ENCODE measurements at regions of chr20 and their contacts with region 1.

Region 1: DNA sequence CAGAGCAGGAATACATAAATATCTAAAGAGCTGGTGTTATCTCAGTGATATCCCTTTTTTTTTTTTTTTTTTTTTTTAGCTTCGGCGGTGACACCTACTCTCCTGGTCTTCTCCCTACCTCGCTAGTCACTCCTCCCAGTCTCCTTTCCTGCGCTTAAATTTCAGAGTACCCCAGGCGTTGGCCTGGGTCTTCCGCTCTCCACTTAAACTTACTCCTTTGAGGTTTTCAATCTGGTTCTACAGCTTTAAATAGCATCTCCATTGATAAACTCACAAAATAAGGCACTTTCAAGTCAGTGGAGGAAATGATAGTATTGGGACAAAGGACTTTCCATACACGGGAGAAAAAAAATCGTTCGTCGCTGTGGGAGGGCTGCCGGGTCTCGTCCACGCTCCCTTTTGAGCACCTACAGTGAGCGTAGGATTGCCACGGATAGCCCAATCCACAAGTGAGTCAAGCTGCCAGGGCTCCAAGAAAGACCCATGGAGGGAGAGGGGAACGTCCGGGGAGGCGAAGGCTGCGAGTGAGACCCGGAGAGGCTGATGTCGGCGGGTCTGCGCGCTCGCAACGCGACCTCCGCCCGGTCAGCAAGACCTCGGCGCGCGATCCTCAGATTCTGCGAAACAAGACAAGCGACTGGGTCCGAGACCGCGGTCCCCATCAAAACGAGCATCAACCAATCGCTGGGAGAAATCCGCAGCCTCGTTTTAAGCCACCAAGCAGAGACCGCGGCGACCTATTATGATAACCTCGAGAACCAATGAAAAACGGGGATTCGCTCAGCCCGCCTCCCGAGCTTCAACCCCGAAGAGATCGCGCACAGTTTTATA is 672 bp upstream of the SRSF6 start:
- DNase-seq: peak; percentile 69 to 94 (median 86)
- ATAC-seq: peak; percentile 86
- H3K4me3 ChIP-seq: peak overlapping the region; percentile 92
- H3K27ac ChIP-seq: peak overlapping the region; percentile 100
- H3K4me1 ChIP-seq: peaks cover 7 to 8% of the 10 kb centered on the region in 2 experiments; a peak in 4 of 5 replicates
- H3K27me3 ChIP-seq: no peaks in the 10 kb centered on the region
- CTCF ChIP-seq: no peak
- EP300 ChIP-seq: no peak
- POLR2A ChIP-seq: no peak
- RAD21 ChIP-seq: no peak

Region 2: GRCh38 chr20:43430265-43431133 is 26.5 kb before region 1 on chr20:
- CTCF ChIA-PET with region 1: no interaction called
- POLR2A ChIA-PET with region 1: interaction called, 14 read pairs
- in situ Hi-C with region 1: no loop called
- intact Hi-C with region 1: no loop called
- DNase-seq: no peak
- ATAC-seq: no peak; the same call in 2 of the 3 replicates
- H3K4me3 ChIP-seq: no peak overlapping the region
- H3K27ac ChIP-seq: no peak overlapping the region
- H3K4me1 ChIP-seq: peaks cover 0 to 12% of the 10 kb centered on the region in 2 experiments; a peak in 3 of 5 replicates
- H3K27me3 ChIP-seq: peaks cover 0 to 15% of the 10 kb centered on the region in 2 experiments; a peak in 3 of 5 replicates
- CTCF ChIP-seq: no peak
- EP300 ChIP-seq: no peak
- POLR2A ChIP-seq: no peak
- RAD21 ChIP-seq: no peak

Region 3: GRCh38 chr20:43472671-43473380 is 15.8 kb after region 1 on chr20:
- CTCF ChIA-PET with region 1: no interaction called
- POLR2A ChIA-PET with region 1: interaction called, 34 read pairs
- in situ Hi-C with region 1: no loop called
- intact Hi-C with region 1: no loop called
- DNase-seq: no peak
- ATAC-seq: no peak
- H3K4me3 ChIP-seq: no peak overlapping the region
- H3K27ac ChIP-seq: no peak overlapping the region
- H3K4me1 ChIP-seq: peaks cover 0 to 3% of the 10 kb centered on the region in 2 experiments; a peak in 2 of 5 replicates
- H3K27me3 ChIP-seq: peaks cover 5 to 8% of the 10 kb centered on the region in 2 experiments; a peak in 4 of 5 replicates
- CTCF ChIP-seq: 0 out of 6 replicates have a peak, but pooled peaks of 1 of the 3 experiments have one; percentile 13
- EP300 ChIP-seq: no peak
- POLR2A ChIP-seq: no peak
- RAD21 ChIP-seq: no peak

Region 4: GRCh38 chr20:43508106-43508505 is 51.1 kb after region 1 on chr20:
- CTCF ChIA-PET with region 1: no interaction called
- POLR2A ChIA-PET with region 1: interaction called, 11 read pairs
- in situ Hi-C with region 1: no loop called
- intact Hi-C with region 1: no loop called
- DNase-seq: peak; percentile 48 to 64 (median 56)
- ATAC-seq: peak; percentile 56
- H3K4me3 ChIP-seq: peak overlapping the region; percentile 65
- H3K27ac ChIP-seq: no peak overlapping the region
- H3K4me1 ChIP-seq: peaks cover 3 to 18% of the 10 kb centered on the region in 2 experiments; a peak in 3 of 5 replicates
- H3K27me3 ChIP-seq: peaks cover 12 to 31% of the 10 kb centered on the region in 2 experiments
- CTCF ChIP-seq: no peak
- EP300 ChIP-seq: no peak
- POLR2A ChIP-seq: no peak
- RAD21 ChIP-seq: no peak

Region 5: DNA sequence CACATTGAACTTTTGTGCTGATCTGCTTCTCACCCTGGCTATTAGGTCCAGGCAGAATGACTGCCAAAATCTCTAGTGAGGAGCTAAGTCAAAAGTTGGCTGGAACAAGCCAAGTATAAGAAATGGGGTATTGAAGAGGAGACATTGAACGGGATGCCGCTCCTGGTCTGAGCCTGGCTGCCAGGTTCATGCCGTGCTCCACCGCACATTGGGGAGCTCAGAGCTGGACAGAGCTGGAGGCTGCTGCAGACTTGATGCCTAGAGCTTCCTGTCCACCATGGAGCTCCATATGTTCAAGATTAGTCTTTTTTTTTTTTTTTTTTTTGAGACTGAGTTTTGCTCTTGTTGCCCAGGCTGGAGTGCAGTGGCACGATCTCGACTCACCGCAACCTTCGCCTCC is 129.6 kb after region 1 on chr20:
- CTCF ChIA-PET with region 1: no interaction called
- POLR2A ChIA-PET with region 1: interaction called, 10 read pairs
- in situ Hi-C with region 1: no loop called
- intact Hi-C with region 1: no loop called
- DNase-seq: no peak
- ATAC-seq: no peak
- H3K4me3 ChIP-seq: no peak overlapping the region
- H3K27ac ChIP-seq: no peak overlapping the region
- H3K4me1 ChIP-seq: peaks cover 25 to 26% of the 10 kb centered on the region in 2 experiments
- H3K27me3 ChIP-seq: no peaks in the 10 kb centered on the region
- CTCF ChIP-seq: no peak
- EP300 ChIP-seq: no peak
- POLR2A ChIP-seq: no peak
- RAD21 ChIP-seq: no peak

Region 6: DNA sequence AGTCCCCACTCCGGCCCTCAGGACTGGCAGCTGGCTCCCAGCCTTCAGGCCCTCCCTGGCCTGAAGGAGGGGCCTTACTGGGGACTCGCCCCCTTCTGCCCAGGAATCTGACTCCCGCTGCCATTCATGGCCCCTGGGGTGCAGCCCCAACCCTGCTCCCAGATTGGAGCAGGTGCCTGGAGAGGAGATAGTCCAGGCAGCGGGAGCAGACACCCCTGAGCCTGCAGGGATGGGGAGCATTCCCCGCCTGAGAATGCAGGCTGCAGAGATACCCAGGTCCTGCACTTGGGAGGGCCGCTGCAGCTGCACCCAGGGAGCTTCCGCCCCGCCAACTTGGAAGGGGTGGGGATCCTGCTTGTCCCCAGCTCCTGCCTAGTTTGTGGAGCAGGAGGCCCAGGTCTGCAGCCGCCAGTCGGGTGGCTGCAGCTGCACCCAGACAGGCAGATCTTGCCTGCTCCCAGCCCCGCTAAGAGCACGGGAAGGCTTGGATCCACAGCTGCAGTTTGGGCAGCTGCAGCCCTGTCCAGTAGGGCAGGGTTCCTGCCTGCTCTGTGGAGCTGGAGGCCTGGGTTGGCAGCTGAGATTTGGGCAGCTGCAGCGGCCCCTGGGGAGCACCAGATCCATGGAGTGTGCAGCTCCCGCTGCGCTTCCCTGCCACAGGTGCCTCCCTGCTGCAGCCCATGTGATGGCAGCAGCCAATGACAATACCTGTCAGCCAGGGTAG is 264.6 kb after region 1 on chr20:
- CTCF ChIA-PET with region 1: no interaction called
- POLR2A ChIA-PET with region 1: interaction called, 3 read pairs
- in situ Hi-C with region 1: no loop called
- intact Hi-C with region 1: loop called (anchors 10 kb)
- DNase-seq: no peak
- ATAC-seq: peak; percentile 11; the same call in 2 of the 3 replicates
- H3K4me3 ChIP-seq: no peak overlapping the region
- H3K27ac ChIP-seq: no peak overlapping the region
- H3K4me1 ChIP-seq: peaks cover 0 to 8% of the 10 kb centered on the region in 2 experiments; a peak in 1 of 5 replicates
- H3K27me3 ChIP-seq: peaks cover 6 to 15% of the 10 kb centered on the region in 2 experiments; a peak in 2 of 5 replicates
- CTCF ChIP-seq: no peak
- EP300 ChIP-seq: no peak
- POLR2A ChIP-seq: no peak
- RAD21 ChIP-seq: no peak

Measured in K562 (cell line).